Tibial artery (tissue), 4 donors: ENCODE measurements at regions of chr1 and their contacts with region 1.

Region 1: GRCh38 chr1:30911046-30911954 is 2.7 kb upstream of the SDC3 start:
- DNase-seq: peak; percentile 91 to 92
- H3K4me3 ChIP-seq: no peak overlapping the region
- H3K27ac ChIP-seq: no peak overlapping the region
- H3K4me1 ChIP-seq: peaks cover 0 to 27% (median 19%) of the 10 kb centered on the region in 4 donors
- H3K27me3 ChIP-seq: no peaks in the 10 kb centered on the region
- CTCF ChIP-seq: peak; percentile 88 to 94

Region 2: GRCh38 chr1:30719406-30720270 is 191.7 kb before region 1 on chr1:
- intact Hi-C with region 1: loop called (anchors 5 kb)
- DNase-seq: no peak
- H3K4me3 ChIP-seq: peak overlapping the region; percentile 52 to 57
- H3K27ac ChIP-seq: peak overlapping the region; percentile 91 to 97
- H3K4me1 ChIP-seq: peaks cover 3 to 21% (median 5%) of the 10 kb centered on the region in 4 donors
- H3K27me3 ChIP-seq: no peaks in the 10 kb centered on the region
- CTCF ChIP-seq: no peak

Region 3: DNA sequence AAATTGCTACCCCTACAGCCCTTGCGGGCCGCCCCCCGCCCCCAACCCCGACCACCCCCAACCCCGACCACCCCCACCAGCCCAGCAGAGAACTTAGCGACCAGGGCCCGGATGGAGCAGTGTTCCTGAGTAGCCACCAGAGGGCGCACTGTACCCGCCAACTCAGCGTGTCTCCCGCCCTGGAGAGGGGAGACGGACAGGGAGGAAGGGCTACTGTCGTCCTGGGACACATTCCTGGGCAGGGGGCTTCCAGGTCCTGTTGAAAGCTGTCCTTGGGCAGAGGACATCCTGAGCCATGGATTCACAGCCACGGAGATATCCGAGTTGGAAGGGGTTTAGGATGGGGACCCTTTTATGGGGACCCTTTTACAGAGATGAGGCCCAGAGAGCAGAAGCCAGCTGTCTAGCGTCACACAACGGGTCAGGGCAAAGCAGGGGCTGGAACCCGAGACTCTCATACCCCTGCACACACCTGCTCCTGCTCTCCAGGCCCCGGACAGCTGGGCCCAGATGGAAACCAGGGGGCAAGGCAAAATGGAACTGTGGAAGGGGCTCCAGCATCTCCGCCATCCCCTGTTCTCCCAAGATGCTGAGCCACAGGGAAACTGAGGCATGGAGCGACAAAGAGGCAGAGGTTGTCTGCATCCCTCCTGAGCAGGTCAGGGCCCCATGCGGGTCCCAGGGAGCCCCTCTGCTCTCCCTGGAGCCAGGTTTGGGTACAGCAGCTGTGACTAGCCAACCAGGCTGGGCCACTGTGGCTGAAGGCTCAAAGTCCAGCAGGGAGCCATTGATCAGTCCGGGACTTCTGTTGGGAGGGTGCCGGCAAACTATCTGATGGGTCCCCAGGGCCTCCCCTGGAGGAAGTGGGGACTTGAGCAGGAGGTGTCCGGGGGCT is 128.7 kb before region 1 on chr1:
- intact Hi-C with region 1: loop called (anchors 1 kb)
- DNase-seq: peak; percentile 47 to 79
- H3K4me3 ChIP-seq: no peak overlapping the region
- H3K27ac ChIP-seq: no peak overlapping the region
- H3K4me1 ChIP-seq: peaks cover 0 to 8% (median 0%) of the 10 kb centered on the region in 4 donors
- H3K27me3 ChIP-seq: peaks cover 0 to 39% of the 10 kb centered on the region in 2 donors
- CTCF ChIP-seq: peak; percentile 73 to 75

Region 4: GRCh38 chr1:30801771-30802198 is 109.5 kb before region 1 on chr1:
- intact Hi-C with region 1: loop called (anchors 2 kb)
- DNase-seq: peak; percentile 82 to 85
- H3K4me3 ChIP-seq: no peak overlapping the region
- H3K27ac ChIP-seq: no peak overlapping the region
- H3K4me1 ChIP-seq: peaks cover 0 to 26% (median 14%) of the 10 kb centered on the region in 4 donors
- H3K27me3 ChIP-seq: no peaks in the 10 kb centered on the region
- CTCF ChIP-seq: peak; percentile 94 to 96

Region 5: DNA sequence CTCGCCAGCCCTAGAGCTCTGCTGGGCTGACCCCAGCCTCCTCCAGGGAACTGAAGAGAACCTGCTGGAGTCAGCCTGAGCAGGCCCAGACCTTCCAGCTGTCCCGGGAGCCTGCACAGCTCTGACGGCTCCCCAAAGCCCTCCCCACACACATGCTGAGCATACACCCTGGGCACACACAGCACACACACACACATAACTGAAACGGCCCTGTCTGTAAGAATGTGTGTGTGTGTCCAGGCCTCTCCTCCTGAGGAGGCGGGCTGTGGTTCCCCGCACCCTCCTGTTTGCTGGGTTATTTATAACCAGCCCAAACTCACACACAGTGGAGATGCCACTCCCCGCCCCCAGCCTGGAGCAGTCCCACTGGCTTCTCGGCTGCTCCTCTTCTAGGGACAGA is 22.9 kb before region 1 on chr1:
- intact Hi-C with region 1: no loop called
- DNase-seq: peak; percentile 64 to 92
- H3K4me3 ChIP-seq: no peak overlapping the region
- H3K27ac ChIP-seq: peak overlapping the region; percentile 92
- H3K4me1 ChIP-seq: peaks cover 7 to 55% (median 47%) of the 10 kb centered on the region in 4 donors
- H3K27me3 ChIP-seq: no peaks in the 10 kb centered on the region
- CTCF ChIP-seq: no peak